Activated B cell treated with CpG ODN at 0.5 μM for 24 hours (primary cell): ENCODE measurements at regions of chr21 and their contacts with region 1.

Region 1: GRCh38 chr21:25385911-25386474 is 221.3 kb downstream of the MRPL39 start:
- DNase-seq: no peak
- ATAC-seq: peak; percentile 58
- H3K4me3 Mint-ChIP-seq: no peak overlapping the region
- H3K27ac Mint-ChIP-seq: no peak overlapping the region
- H3K4me1 Mint-ChIP-seq: peaks cover 15% of the 10 kb centered on the region
- H3K27me3 Mint-ChIP-seq: no peaks in the 10 kb centered on the region
- CTCF ChIP-seq: peak; percentile 99

Region 2: DNA sequence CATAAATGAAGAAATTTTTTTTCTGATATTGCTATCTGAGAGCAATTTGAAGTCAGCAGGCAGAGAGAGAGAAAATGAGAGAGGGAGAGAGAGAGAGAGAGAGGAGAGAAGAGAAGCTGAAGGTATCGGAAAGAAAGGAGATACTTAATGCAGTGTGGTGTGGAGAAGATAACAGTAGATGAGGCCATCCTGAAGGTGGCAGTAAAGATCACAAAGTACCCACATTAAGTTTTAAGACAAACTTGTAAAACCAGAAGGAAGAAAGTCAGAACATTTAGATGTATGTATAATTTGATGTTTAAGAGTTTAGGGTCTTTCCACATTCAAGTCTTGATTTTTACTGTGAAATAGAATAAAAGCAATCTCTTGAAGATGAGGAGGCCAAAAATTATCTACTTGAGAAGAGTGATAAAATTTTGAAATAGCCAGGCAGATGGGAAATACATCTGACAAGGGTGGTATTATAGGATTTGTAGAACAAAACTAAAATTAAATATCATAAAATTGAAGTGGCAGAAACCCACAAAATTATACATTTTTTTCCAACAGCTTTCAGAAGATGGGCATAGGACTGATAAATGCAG is 1532.1 kb before region 1 on chr21:
- CTCF ChIA-PET with region 1: interaction called, 4 read pairs
- POLR2A ChIA-PET with region 1: no interaction called
- intact Hi-C with region 1: loop called (anchors 1 kb)
- DNase-seq: no peak
- ATAC-seq: peak; percentile 67
- H3K4me3 Mint-ChIP-seq: no peak overlapping the region
- H3K27ac Mint-ChIP-seq: no peak overlapping the region
- H3K4me1 Mint-ChIP-seq: peaks cover 15% of the 10 kb centered on the region
- H3K27me3 Mint-ChIP-seq: no peaks in the 10 kb centered on the region
- CTCF ChIP-seq: no peak

Region 3: GRCh38 chr21:24045775-24046215 is 1340.2 kb before region 1 on chr21:
- CTCF ChIA-PET with region 1: no interaction called
- POLR2A ChIA-PET with region 1: no interaction called
- intact Hi-C with region 1: loop called (anchors 10 kb)
- DNase-seq: no peak
- ATAC-seq: no peak
- H3K4me3 Mint-ChIP-seq: peak overlapping the region; percentile 25
- H3K27ac Mint-ChIP-seq: peak overlapping the region; percentile 31
- H3K4me1 Mint-ChIP-seq: peaks cover 64% of the 10 kb centered on the region
- H3K27me3 Mint-ChIP-seq: no peaks in the 10 kb centered on the region
- CTCF ChIP-seq: no peak

Region 4: GRCh38 chr21:24514081-24514733 is 871.8 kb before region 1 on chr21:
- CTCF ChIA-PET with region 1: no interaction called
- POLR2A ChIA-PET with region 1: no interaction called
- intact Hi-C with region 1: loop called (anchors 1 kb)
- DNase-seq: no peak
- ATAC-seq: no peak
- H3K4me3 Mint-ChIP-seq: no peak overlapping the region
- H3K27ac Mint-ChIP-seq: no peak overlapping the region
- H3K4me1 Mint-ChIP-seq: no peaks in the 10 kb centered on the region
- H3K27me3 Mint-ChIP-seq: no peaks in the 10 kb centered on the region
- CTCF ChIP-seq: no peak

Region 5: GRCh38 chr21:25039461-25040380 is 346.3 kb before region 1 on chr21:
- CTCF ChIA-PET with region 1: no interaction called
- POLR2A ChIA-PET with region 1: no interaction called
- intact Hi-C with region 1: loop called (anchors 2 kb)
- DNase-seq: no peak
- ATAC-seq: peak; percentile 64
- H3K4me3 Mint-ChIP-seq: peak overlapping the region; percentile 74
- H3K27ac Mint-ChIP-seq: peak overlapping the region; percentile 80
- H3K4me1 Mint-ChIP-seq: peaks cover 35% of the 10 kb centered on the region
- H3K27me3 Mint-ChIP-seq: no peaks in the 10 kb centered on the region
- CTCF ChIP-seq: no peak

Region 6: DNA sequence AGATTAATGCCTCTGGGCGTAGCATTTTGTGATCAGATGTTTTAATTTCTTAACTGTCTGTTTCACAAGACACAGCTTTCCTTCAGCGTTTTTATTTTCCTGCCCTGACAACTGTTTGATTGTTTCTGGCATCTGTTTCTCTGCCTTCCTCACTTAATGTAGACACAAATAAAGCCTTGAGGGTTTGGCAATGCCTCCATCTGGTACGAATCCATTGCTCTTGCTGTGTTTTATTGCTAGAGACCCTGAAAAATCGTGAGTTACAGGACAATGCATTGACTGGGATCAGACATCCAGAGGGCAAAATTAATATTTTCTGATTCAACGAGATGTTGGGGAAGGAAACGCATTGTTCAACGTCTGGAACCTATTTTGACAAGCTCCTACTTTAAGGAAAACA is 142.2 kb before region 1 on chr21:
- CTCF ChIA-PET with region 1: no interaction called
- POLR2A ChIA-PET with region 1: no interaction called
- intact Hi-C with region 1: no loop called
- DNase-seq: no peak
- ATAC-seq: no peak
- H3K4me3 Mint-ChIP-seq: no peak overlapping the region
- H3K27ac Mint-ChIP-seq: no peak overlapping the region
- H3K4me1 Mint-ChIP-seq: peaks cover 35% of the 10 kb centered on the region
- H3K27me3 Mint-ChIP-seq: no peaks in the 10 kb centered on the region
- CTCF ChIP-seq: no peak

Region 7: DNA sequence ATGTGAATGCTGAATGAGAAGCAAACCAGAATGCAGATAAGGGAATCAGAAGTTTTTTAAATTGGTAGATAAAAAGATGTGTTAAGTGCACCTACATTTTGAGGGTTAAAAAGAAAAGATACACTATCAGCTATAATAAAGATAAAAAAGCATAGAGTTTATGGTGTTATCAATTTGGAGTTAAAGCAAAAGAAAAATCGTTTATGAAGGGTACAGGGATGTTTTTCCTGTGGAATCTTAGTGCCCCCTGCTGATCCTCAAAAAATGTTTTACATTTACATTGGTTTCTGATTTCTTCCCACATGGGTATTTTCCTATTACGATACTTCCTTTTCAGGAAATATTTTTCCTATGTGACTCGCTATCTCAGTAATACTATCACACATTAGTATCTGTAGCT is 72.2 kb before region 1 on chr21:
- CTCF ChIA-PET with region 1: interaction called, 4 read pairs
- POLR2A ChIA-PET with region 1: no interaction called
- intact Hi-C with region 1: loop called (anchors 2 kb)
- DNase-seq: no peak
- ATAC-seq: peak; percentile 40
- H3K4me3 Mint-ChIP-seq: peak overlapping the region; percentile 62
- H3K27ac Mint-ChIP-seq: peak overlapping the region; percentile 31
- H3K4me1 Mint-ChIP-seq: peaks cover 11% of the 10 kb centered on the region
- H3K27me3 Mint-ChIP-seq: no peaks in the 10 kb centered on the region
- CTCF ChIP-seq: peak; percentile 32